ENCODE measurements at regions of chr4 and their contacts with region 1.

Region 1: DNA sequence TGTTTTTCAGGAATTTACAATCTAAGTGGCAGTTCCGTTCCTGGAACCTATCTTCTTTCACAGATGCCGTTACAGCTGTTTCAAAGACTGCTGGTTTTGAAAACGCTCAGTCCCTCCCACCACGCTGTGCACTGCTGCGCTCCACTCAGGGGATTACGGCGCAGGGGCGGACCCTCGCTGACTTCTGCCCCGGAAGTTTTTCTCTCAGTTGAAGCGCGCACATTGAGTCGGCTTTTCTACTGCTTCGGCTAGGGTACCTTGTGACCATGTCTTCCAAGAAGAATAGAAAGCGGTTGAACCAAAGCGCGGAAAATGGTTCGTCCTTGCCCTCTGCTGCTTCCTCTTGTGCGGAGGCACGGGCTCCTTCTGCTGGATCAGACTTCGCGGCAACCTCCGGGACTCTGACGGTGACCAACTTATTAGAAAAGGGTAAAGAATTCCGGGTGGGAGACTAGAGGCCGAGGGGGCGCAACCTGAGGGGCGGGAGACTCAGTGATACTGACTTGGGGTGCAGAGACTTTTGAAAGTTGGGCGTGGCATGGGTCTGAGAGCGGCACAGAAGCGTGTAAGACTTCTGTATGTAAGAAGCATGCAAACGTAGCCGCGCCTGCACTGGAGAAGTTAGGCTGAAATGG is 597 bp upstream of the NUDT6 start:
- DNase-seq: peak; percentile 87 to 91 (median 89)
- ATAC-seq: peak; percentile 97
- H3K4me3 ChIP-seq: peak overlapping the region; percentile 64
- H3K4me1 ChIP-seq: peaks cover 5% of the 10 kb centered on the region
- CTCF ChIP-seq: no peak

Region 2: DNA sequence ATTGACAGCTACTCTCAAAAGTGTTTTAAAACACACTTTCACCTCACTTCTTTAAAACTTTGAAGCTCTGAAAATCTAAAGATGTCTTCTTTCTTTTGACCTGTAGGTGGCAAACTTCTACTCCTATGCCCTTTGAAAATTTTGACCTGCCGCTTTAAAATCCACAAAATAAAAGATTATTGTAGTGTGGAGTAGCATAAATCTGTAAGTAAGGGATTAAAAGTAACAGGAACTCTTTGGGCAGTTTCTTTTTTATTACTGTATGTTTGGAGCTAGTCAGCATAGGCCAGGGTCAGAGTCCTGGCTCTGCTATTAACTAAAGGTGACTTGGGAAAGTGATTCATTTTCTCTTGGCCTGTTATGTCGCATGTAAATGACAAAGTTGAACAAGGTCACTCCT is 165.0 kb before region 1 on chr4:
- intact Hi-C with region 1: loop called (anchors 5 to 10 kb)
- DNase-seq: peak in 1 of 3 donors; percentile 51
- ATAC-seq: peak; percentile 98
- H3K4me3 ChIP-seq: no peak overlapping the region
- H3K4me1 ChIP-seq: peaks cover 5% of the 10 kb centered on the region
- CTCF ChIP-seq: peak; percentile 49